Activated CD8-positive, alpha-beta T cell treated with anti-CD3 and anti-CD28 coated beads, Interleukin-2, amount 10 ng/mL, durations not matched to agents 7 days and 5 days (primary cell): ENCODE measurements at regions of chr15 and their contacts with region 1.

Region 1: DNA sequence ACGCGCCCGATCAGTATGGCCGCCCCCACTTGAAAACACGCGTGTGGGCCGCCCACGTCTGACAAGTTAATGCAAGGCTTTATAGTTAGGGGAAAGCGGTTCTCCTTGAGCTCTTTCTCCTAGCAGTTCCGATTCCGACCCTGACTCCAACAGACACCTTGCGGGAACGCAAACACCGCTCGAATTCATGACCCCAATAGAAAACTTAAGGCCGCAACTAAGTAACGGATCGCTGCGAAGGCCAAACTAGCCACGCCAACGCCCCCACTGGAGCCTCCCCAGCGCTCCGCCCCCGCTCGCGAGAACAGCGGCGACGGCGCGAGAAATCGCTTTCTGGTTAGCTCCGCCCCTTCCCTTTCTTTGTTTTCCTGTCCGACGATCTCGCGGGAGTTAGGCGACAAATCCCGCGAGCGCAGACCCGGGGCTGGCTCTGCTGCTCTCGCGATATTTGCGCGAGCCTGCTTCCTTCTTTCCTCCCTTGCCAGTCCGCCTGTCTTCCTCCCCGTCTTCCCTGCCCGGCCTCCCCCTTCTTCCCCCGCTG is at the start of gene IREB2:
- DNase-seq: peak; percentile 98
- ATAC-seq: peak; percentile 89
- H3K4me3 Mint-ChIP-seq: peak within 1 kb of the TSS; percentile 86
- H3K27ac Mint-ChIP-seq: peak within 1 kb of the TSS; percentile 90
- H3K4me1 Mint-ChIP-seq: peaks cover 45% of the 10 kb centered on the region
- H3K27me3 Mint-ChIP-seq: peaks cover 3% of the 10 kb centered on the region
- total RNA-seq, gene IREB2: 52.5 to 62.4 TPM

Region 2: GRCh38 chr15:78299101-78299930 is 138.5 kb before region 1 on chr15 and contains the start of gene SKIC8:
- CTCF ChIA-PET with region 1: interaction called, 4 read pairs
- POLR2A ChIA-PET with region 1: interaction called, 28 read pairs
- DNase-seq: peak; percentile 92
- ATAC-seq: peak; percentile 98
- H3K4me3 Mint-ChIP-seq: peak within 1 kb of the TSS; percentile 100
- H3K27ac Mint-ChIP-seq: peak within 1 kb of the TSS; percentile 94
- H3K4me1 Mint-ChIP-seq: peaks cover 28% of the 10 kb centered on the region
- H3K27me3 Mint-ChIP-seq: no peaks in the 10 kb centered on the region
- total RNA-seq, gene SKIC8: 47.4 to 50.3 TPM

Region 3: GRCh38 chr15:78422571-78423340 is 15.1 kb before region 1 on chr15:
- CTCF ChIA-PET with region 1: interaction called, 33 read pairs
- POLR2A ChIA-PET with region 1: interaction called, 7 read pairs
- DNase-seq: peak; percentile 77
- ATAC-seq: peak; percentile 67
- H3K4me3 Mint-ChIP-seq: no peak overlapping the region
- H3K27ac Mint-ChIP-seq: no peak overlapping the region
- H3K4me1 Mint-ChIP-seq: peaks cover 21% of the 10 kb centered on the region
- H3K27me3 Mint-ChIP-seq: peaks cover 18% of the 10 kb centered on the region

Region 4: DNA sequence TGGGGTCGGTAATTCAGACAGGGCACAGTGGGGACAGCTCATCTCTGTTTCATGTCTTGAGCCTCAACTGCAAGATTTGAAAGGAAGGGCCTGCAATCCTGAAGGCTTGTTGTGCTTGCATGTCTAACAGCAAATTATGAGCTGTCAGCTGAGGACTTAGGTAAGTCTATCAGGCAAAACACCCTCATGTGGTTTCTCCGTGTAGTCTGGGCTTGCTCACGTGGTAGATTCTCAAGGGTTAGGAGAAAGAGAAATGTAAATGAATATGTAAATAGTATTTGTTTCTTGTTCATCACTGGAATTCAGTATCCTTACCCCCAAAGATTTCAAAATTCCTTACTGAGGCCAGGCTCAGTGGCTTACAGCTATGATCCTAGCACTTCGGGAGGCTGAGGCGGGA is 39.5 kb after region 1 on chr15:
- CTCF ChIA-PET with region 1: no interaction called
- POLR2A ChIA-PET with region 1: no interaction called
- DNase-seq: no peak
- ATAC-seq: no peak
- H3K4me3 Mint-ChIP-seq: no peak overlapping the region
- H3K27ac Mint-ChIP-seq: no peak overlapping the region
- H3K4me1 Mint-ChIP-seq: no peaks in the 10 kb centered on the region
- H3K27me3 Mint-ChIP-seq: no peaks in the 10 kb centered on the region

Region 5: GRCh38 chr15:78540141-78540928 is 102.5 kb after region 1 on chr15 and contains the start of gene PSMA4:
- CTCF ChIA-PET with region 1: no interaction called
- POLR2A ChIA-PET with region 1: interaction called, 28 read pairs
- DNase-seq: peak; percentile 95
- ATAC-seq: peak; percentile 85
- H3K4me3 Mint-ChIP-seq: peak within 1 kb of the TSS; percentile 90
- H3K27ac Mint-ChIP-seq: peak within 1 kb of the TSS; percentile 91
- H3K4me1 Mint-ChIP-seq: peaks cover 34% of the 10 kb centered on the region
- H3K27me3 Mint-ChIP-seq: no peaks in the 10 kb centered on the region
- total RNA-seq, gene PSMA4: 252 to 260 TPM